ENCODE measurements at regions of chr19 and their contacts with region 1.

Region 1: GRCh38 chr19:40529093-40529954 is 47.3 kb upstream of the SHKBP1 start:
- DNase-seq: peak; percentile 95

Region 2: GRCh38 chr19:40465557-40466150 is 63.7 kb before region 1 on chr19 and contains the start of gene BLVRB:
- intact Hi-C with region 1: loop called (anchors 2 kb)
- DNase-seq: peak; percentile 100
- total RNA-seq, gene BLVRB: 81.6 TPM

Region 3: GRCh38 chr19:40598121-40598917 is 69.0 kb after region 1 on chr19:
- intact Hi-C with region 1: loop called (anchors 2 kb)
- DNase-seq: peak; percentile 95

Region 4: DNA sequence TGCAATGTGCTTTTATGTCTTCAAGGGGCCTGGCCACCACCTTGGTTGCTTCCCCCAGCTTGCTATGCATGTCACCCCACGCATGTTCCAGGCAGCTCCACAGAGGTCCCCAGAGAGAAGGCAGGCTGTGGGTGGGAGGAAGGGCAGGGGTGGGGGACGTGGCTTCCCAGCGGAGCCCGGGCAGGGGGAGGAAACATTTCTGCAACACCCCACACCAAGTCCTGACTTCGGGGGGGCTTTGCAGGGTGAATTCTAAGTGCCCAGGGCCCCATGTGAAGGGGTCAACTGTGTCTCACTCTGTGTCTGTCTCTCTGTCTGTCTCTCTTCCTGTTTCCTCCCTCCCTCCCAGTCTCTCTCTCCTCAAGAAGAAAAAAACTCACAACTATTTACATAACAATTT is 111.4 kb after region 1 on chr19:
- intact Hi-C with region 1: loop called (anchors 5 kb)
- DNase-seq: no peak